HCT116 (cell line): ENCODE measurements at regions of chr7 and their contacts with region 1.

Region 1: GRCh38 chr7:142557971-142558582 is 191.2 kb upstream of the PRSS1 start:
- DNase-seq: peak; percentile 51
- ATAC-seq: peak; percentile 84
- H3K4me3 ChIP-seq: no peak overlapping the region
- H3K27ac ChIP-seq: no peak overlapping the region
- H3K4me1 ChIP-seq: peaks cover 14 to 35% of the 10 kb centered on the region in 2 experiments
- H3K27me3 ChIP-seq: no peaks in the 10 kb centered on the region
- CTCF ChIP-seq: peak; percentile 83 to 96 (median 91)
- POLR2A ChIP-seq: no peak
- RAD21 ChIP-seq: peak; percentile 59

Region 2: GRCh38 chr7:142546452-142546851 is 11.6 kb before region 1 on chr7:
- CTCF ChIA-PET with region 1: interaction called, 10 read pairs
- POLR2A ChIA-PET with region 1: interaction called, 3 read pairs
- RAD21 ChIA-PET with region 1: no interaction called
- intact Hi-C with region 1: no loop called
- DNase-seq: no peak
- ATAC-seq: no peak
- H3K4me3 ChIP-seq: no peak overlapping the region
- H3K27ac ChIP-seq: no peak overlapping the region
- H3K4me1 ChIP-seq: no peaks in the 10 kb centered on the region
- H3K27me3 ChIP-seq: no peaks in the 10 kb centered on the region
- CTCF ChIP-seq: no peak
- POLR2A ChIP-seq: no peak
- RAD21 ChIP-seq: no peak

Region 3: GRCh38 chr7:142568435-142569097 is 10.5 kb after region 1 on chr7:
- CTCF ChIA-PET with region 1: interaction called, 13 read pairs
- POLR2A ChIA-PET with region 1: interaction called, 3 read pairs
- RAD21 ChIA-PET with region 1: no interaction called
- intact Hi-C with region 1: no loop called
- DNase-seq: no peak
- ATAC-seq: peak; percentile 91
- H3K4me3 ChIP-seq: peak overlapping the region in 1 of 2 experiments; percentile 17; a peak in 2 of 4 replicates
- H3K27ac ChIP-seq: no peak overlapping the region
- H3K4me1 ChIP-seq: peaks cover 5 to 17% of the 10 kb centered on the region in 2 experiments
- H3K27me3 ChIP-seq: no peaks in the 10 kb centered on the region
- CTCF ChIP-seq: no peak
- POLR2A ChIP-seq: no peak
- RAD21 ChIP-seq: no peak

Region 4: GRCh38 chr7:142645777-142646176 is 87.7 kb after region 1 on chr7:
- CTCF ChIA-PET with region 1: no interaction called
- POLR2A ChIA-PET with region 1: no interaction called
- RAD21 ChIA-PET with region 1: no interaction called
- intact Hi-C with region 1: no loop called
- DNase-seq: no peak
- ATAC-seq: no peak
- H3K4me3 ChIP-seq: no peak overlapping the region
- H3K27ac ChIP-seq: no peak overlapping the region
- H3K4me1 ChIP-seq: no peaks in the 10 kb centered on the region
- H3K27me3 ChIP-seq: peaks cover 74% of the 10 kb centered on the region
- CTCF ChIP-seq: no peak
- POLR2A ChIP-seq: no peak
- RAD21 ChIP-seq: no peak